ENCODE measurements at regions of chr1 and their contacts with region 1.

Region 1: DNA sequence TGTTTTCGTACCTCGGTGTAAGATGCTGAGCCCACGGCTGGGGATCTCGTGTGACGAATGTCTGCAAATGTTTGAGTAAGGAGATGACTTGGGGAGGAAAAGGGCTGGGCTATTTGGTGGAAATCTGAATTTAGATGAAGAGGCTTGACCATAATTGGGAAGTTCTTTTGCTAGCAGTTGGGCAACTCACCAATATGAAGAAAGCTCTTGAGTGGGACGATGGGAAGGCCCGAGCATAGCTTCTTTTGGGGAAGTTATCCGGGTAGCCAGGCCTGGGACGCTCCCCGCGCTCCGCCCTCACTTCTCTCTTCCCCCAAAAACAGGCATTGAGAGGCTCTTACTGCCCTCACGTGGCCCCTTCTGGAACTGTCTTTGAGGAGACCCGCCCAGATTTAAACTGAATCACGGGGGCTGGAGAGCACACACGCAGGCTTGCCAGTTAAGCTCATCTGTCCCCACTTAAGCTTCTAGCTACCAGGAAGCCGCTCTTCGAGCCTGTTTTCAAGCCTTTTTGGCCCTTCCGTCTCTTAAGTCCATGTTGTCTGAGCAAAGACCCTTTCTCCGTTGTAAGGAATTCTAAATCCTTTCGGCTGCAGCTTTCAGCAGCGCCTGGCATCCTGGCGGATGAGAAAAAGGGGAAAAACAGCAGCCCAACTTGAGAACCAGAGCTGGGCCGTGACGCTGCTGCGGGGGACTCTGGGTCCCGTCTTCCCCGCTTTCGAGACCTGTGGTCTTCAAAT is 93.1 kb downstream of the NID1 start:
- DNase-seq: peak; percentile 75 to 92 (median 84)
- ATAC-seq: peak; percentile 99
- H3K4me3 ChIP-seq: peak overlapping the region; percentile 13
- H3K4me3 Mint-ChIP-seq: peak overlapping the region; percentile 55
- H3K27ac ChIP-seq: peak overlapping the region in 1 of 2 donors; percentile 14
- H3K27ac Mint-ChIP-seq: peak overlapping the region; percentile 75
- H3K4me1 ChIP-seq: peaks cover 12% of the 10 kb centered on the region
- H3K4me1 Mint-ChIP-seq: peaks cover 17% of the 10 kb centered on the region
- H3K27me3 ChIP-seq: no peaks in the 10 kb centered on the region
- H3K27me3 Mint-ChIP-seq: no peaks in the 10 kb centered on the region
- CTCF ChIP-seq: peak; percentile 84

Region 2: DNA sequence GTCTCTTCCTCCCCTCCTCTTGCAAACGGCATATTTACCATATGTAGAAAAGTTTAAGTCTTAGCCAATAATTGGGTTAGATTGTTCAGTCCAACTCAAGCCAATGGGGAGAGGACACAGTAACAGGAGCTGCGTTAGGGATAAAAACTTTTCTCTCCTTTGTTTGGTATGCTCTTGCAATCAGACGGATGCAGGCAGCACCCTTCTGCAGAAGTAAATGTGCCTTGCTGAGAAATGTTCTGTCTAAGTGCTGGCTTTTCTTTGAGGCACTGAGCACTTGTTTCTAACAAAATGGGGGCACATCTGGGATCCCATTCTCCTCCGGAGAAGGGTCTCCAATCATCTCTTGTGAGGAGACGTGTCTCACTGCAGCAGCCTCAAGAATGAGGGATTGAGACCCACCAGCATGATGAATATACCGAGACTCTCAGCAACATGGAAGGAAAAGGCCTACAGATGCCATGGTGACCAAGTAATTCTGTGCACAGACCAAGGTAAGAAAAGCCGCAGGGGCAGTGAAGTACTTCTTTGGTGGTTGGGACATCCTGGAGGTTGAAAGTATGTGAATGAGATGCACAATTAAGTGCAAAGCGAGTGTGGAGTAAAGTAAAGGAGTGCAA is 301.5 kb before region 1 on chr1:
- CTCF ChIA-PET with region 1: no interaction called
- POLR2A ChIA-PET with region 1: no interaction called
- intact Hi-C with region 1: no loop called
- DNase-seq: no peak
- ATAC-seq: no peak
- H3K4me3 ChIP-seq: no peak overlapping the region
- H3K4me3 Mint-ChIP-seq: no peak overlapping the region
- H3K27ac ChIP-seq: no peak overlapping the region
- H3K27ac Mint-ChIP-seq: no peak overlapping the region
- H3K4me1 ChIP-seq: no peaks in the 10 kb centered on the region
- H3K4me1 Mint-ChIP-seq: no peaks in the 10 kb centered on the region
- H3K27me3 ChIP-seq: no peaks in the 10 kb centered on the region
- H3K27me3 Mint-ChIP-seq: no peaks in the 10 kb centered on the region
- CTCF ChIP-seq: no peak

Region 3: GRCh38 chr1:235783148-235783776 is 188.5 kb before region 1 on chr1:
- CTCF ChIA-PET with region 1: interaction called, 4 read pairs
- POLR2A ChIA-PET with region 1: no interaction called
- intact Hi-C with region 1: loop called (anchors 2 to 5 kb)
- DNase-seq: peak in 3 of 14 experiments; percentile 19 to 39 (median 38)
- ATAC-seq: no peak
- H3K4me3 ChIP-seq: no peak overlapping the region
- H3K4me3 Mint-ChIP-seq: no peak overlapping the region
- H3K27ac ChIP-seq: no peak overlapping the region
- H3K27ac Mint-ChIP-seq: no peak overlapping the region
- H3K4me1 ChIP-seq: no peaks in the 10 kb centered on the region
- H3K4me1 Mint-ChIP-seq: no peaks in the 10 kb centered on the region
- H3K27me3 ChIP-seq: no peaks in the 10 kb centered on the region
- H3K27me3 Mint-ChIP-seq: no peaks in the 10 kb centered on the region
- CTCF ChIP-seq: peak; percentile 75

Region 4: GRCh38 chr1:235866913-235867845 is 104.6 kb before region 1 on chr1:
- CTCF ChIA-PET with region 1: interaction called, 41 read pairs
- POLR2A ChIA-PET with region 1: interaction called, 48 read pairs
- intact Hi-C with region 1: loop called (anchors 1 kb)
- DNase-seq: peak; percentile 95 to 99 (median 98)
- ATAC-seq: peak; percentile 66
- H3K4me3 ChIP-seq: peak overlapping the region; percentile 87
- H3K4me3 Mint-ChIP-seq: peak overlapping the region; percentile 98
- H3K27ac ChIP-seq: peak overlapping the region; percentile 95 to 99
- H3K27ac Mint-ChIP-seq: peak overlapping the region; percentile 98
- H3K4me1 ChIP-seq: peaks cover 44% of the 10 kb centered on the region
- H3K4me1 Mint-ChIP-seq: peaks cover 55% of the 10 kb centered on the region
- H3K27me3 ChIP-seq: no peaks in the 10 kb centered on the region
- H3K27me3 Mint-ChIP-seq: no peaks in the 10 kb centered on the region
- CTCF ChIP-seq: no peak

Region 5: GRCh38 chr1:235908742-235909520 is 62.8 kb before region 1 on chr1:
- CTCF ChIA-PET with region 1: no interaction called
- POLR2A ChIA-PET with region 1: no interaction called
- intact Hi-C with region 1: no loop called
- DNase-seq: peak in 2 of 14 experiments; percentile 38 to 62
- ATAC-seq: no peak
- H3K4me3 ChIP-seq: no peak overlapping the region
- H3K4me3 Mint-ChIP-seq: no peak overlapping the region
- H3K27ac ChIP-seq: no peak overlapping the region
- H3K27ac Mint-ChIP-seq: no peak overlapping the region
- H3K4me1 ChIP-seq: no peaks in the 10 kb centered on the region
- H3K4me1 Mint-ChIP-seq: no peaks in the 10 kb centered on the region
- H3K27me3 ChIP-seq: no peaks in the 10 kb centered on the region
- H3K27me3 Mint-ChIP-seq: no peaks in the 10 kb centered on the region
- CTCF ChIP-seq: no peak

Region 6: GRCh38 chr1:235923466-235924021 is 48.2 kb before region 1 on chr1:
- CTCF ChIA-PET with region 1: no interaction called
- POLR2A ChIA-PET with region 1: no interaction called
- intact Hi-C with region 1: loop called in 1 of 2 experiments (anchors 10 kb)
- DNase-seq: peak in 10 of 14 experiments; percentile 6 to 71 (median 22)
- ATAC-seq: peak; percentile 83
- H3K4me3 ChIP-seq: no peak overlapping the region
- H3K4me3 Mint-ChIP-seq: peak overlapping the region; percentile 36
- H3K27ac ChIP-seq: peak overlapping the region; percentile 15 to 44
- H3K27ac Mint-ChIP-seq: peak overlapping the region; percentile 79
- H3K4me1 ChIP-seq: peaks cover 29% of the 10 kb centered on the region
- H3K4me1 Mint-ChIP-seq: peaks cover 24% of the 10 kb centered on the region
- H3K27me3 ChIP-seq: no peaks in the 10 kb centered on the region
- H3K27me3 Mint-ChIP-seq: no peaks in the 10 kb centered on the region
- CTCF ChIP-seq: no peak

Region 7: DNA sequence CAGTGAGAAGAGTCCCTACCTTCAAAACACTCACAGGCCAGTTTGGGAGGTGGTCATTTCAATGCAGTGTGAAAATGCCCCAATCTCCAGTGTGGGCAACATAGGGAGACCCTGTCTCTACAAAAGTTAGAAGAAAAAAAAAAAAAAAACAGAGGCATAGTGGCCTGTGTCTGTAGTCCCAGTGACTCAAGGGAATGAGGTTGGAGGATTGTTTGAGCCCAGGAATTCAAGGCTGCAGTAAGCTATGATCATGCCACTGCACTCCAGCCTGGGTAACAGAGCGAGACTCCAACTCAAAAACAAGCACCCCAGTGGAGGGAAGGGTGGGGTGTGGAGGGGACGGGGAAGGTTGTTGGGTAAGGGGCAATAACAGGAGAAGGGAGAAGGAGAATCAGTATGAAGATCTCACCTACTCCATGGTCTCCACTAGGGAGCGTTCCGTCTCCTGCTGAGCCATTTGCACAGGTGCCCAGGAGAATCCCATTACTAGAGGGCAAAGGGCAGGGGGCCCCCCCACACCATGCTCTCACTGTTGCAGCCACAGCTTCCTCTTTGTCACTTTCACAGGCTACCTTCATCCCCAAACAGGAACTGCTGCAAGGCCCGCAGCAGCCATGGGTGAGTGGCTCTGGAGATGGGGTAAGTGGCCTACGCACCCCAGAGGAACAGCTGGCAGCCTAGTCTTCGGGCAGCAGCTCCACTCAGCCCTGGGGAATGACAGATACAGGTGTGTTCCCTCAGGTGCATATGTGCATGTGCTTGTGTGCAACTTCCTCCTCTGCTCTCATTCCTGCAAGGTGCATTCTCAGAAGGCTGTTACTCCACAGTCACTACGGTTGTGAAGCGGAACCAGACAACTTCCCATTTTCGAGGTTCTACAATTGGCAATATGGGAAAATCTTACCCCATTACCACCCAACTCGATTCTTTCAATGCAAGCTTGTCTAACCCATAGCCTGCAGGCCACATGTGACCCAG is 17.1 kb before region 1 on chr1:
- CTCF ChIA-PET with region 1: interaction called, 18 read pairs
- POLR2A ChIA-PET with region 1: interaction called, 11 read pairs
- intact Hi-C with region 1: no loop called
- DNase-seq: peak; percentile 12 to 72 (median 40)
- ATAC-seq: peak; percentile 86
- H3K4me3 ChIP-seq: no peak overlapping the region
- H3K4me3 Mint-ChIP-seq: peak overlapping the region; percentile 27
- H3K27ac ChIP-seq: no peak overlapping the region
- H3K27ac Mint-ChIP-seq: peak overlapping the region; percentile 76
- H3K4me1 ChIP-seq: peaks cover 26% of the 10 kb centered on the region
- H3K4me1 Mint-ChIP-seq: peaks cover 39% of the 10 kb centered on the region
- H3K27me3 ChIP-seq: no peaks in the 10 kb centered on the region
- H3K27me3 Mint-ChIP-seq: no peaks in the 10 kb centered on the region
- CTCF ChIP-seq: no peak

Region 8: DNA sequence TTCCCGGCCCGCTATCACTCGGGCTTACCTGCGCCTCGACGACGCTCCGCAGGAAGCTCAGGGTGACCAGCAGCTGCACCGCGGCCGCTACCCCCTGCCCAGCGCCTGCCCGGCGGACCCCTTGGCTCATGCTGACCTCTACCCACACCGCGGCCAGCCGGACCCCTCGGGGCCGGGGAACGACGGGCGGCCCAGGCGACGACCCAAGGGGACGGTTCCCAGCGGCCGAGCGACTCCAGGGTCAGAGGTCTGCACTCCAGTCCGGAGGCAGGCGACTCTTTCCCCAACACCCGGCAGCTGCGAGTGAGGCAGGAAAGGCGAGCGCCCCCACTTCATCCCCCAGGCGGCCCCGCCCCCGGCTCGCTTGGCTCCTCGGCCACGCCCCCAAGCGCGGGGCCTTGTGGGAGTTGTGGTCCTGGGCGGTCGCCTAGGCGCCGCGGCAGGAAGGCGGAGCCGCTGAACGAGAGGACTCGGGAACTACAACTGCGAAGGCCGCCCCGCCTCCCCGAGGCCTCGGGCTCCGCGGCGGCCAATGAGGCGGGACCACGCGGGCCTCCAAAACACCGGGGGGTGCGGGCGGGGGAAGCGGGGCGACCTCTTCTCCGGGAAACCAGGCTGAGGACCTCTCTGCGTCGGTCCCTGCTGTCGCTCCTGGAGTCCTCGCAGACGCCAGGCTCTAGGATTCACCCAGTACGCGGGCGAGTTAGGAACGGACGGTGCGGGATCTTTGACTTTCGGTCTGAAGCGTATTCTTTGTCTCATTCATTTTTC is 310.1 kb after region 1 on chr1 and contains the start of gene ERO1B:
- CTCF ChIA-PET with region 1: no interaction called
- POLR2A ChIA-PET with region 1: no interaction called
- intact Hi-C with region 1: loop called in 1 of 2 experiments (anchors 10 kb)
- DNase-seq: peak; percentile 92 to 99 (median 98)
- ATAC-seq: peak; percentile 92
- H3K4me3 ChIP-seq: peak within 1 kb of the TSS; percentile 88
- H3K4me3 Mint-ChIP-seq: peak within 1 kb of the TSS; percentile 97
- H3K27ac ChIP-seq: peak within 1 kb of the TSS; percentile 63 to 81
- H3K27ac Mint-ChIP-seq: peak within 1 kb of the TSS; percentile 80
- H3K4me1 ChIP-seq: peaks cover 25% of the 10 kb centered on the region
- H3K4me1 Mint-ChIP-seq: peaks cover 57% of the 10 kb centered on the region
- H3K27me3 ChIP-seq: no peaks in the 10 kb centered on the region
- H3K27me3 Mint-ChIP-seq: no peaks in the 10 kb centered on the region
- CTCF ChIP-seq: no peak
- total RNA-seq, gene ERO1B: 15.2 to 16.5 TPM

Region 9: DNA sequence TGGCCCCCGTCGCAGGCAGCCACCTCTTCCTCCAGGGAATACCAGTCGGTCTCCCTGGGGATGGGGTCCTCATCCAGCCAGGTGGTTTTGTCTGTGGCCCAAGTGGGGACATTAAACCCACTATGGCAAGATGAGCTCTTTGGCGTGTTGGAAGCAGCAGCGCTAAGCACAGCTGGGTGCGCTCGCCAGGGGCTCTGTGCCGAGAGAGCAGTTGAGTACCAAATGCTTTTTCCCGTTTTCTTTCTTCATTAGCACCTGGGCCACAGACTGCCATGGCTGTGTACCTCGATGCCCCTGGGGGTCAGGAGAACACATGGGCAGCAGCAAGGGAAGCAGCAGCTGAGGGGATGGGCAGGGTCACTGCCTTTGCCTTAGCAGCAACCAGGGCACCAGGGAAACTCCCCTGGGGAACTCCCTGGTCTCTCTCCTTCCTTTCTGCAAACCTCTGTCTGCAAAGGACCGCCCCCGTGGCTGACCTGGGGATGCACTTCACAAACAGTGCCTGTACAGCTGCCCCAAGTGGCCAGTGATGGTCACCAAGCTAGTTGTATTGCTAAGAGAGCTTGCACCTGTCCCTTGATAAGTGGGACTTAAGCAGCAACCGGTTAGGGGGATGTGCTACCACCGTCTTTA is 453.4 kb after region 1 on chr1:
- CTCF ChIA-PET with region 1: no interaction called
- POLR2A ChIA-PET with region 1: no interaction called
- intact Hi-C with region 1: no loop called
- DNase-seq: peak in 4 of 14 experiments; percentile 3 to 71 (median 42)
- ATAC-seq: no peak
- H3K4me3 ChIP-seq: no peak overlapping the region
- H3K4me3 Mint-ChIP-seq: no peak overlapping the region
- H3K27ac ChIP-seq: no peak overlapping the region
- H3K27ac Mint-ChIP-seq: no peak overlapping the region
- H3K4me1 ChIP-seq: peaks cover 11% of the 10 kb centered on the region
- H3K4me1 Mint-ChIP-seq: no peaks in the 10 kb centered on the region
- H3K27me3 ChIP-seq: no peaks in the 10 kb centered on the region
- H3K27me3 Mint-ChIP-seq: no peaks in the 10 kb centered on the region
- CTCF ChIP-seq: no peak

Measured in CD4-positive, alpha-beta T cell (primary cell).